ENCODE measurements at regions of chr11 and their contacts with region 1.

Region 1: DNA sequence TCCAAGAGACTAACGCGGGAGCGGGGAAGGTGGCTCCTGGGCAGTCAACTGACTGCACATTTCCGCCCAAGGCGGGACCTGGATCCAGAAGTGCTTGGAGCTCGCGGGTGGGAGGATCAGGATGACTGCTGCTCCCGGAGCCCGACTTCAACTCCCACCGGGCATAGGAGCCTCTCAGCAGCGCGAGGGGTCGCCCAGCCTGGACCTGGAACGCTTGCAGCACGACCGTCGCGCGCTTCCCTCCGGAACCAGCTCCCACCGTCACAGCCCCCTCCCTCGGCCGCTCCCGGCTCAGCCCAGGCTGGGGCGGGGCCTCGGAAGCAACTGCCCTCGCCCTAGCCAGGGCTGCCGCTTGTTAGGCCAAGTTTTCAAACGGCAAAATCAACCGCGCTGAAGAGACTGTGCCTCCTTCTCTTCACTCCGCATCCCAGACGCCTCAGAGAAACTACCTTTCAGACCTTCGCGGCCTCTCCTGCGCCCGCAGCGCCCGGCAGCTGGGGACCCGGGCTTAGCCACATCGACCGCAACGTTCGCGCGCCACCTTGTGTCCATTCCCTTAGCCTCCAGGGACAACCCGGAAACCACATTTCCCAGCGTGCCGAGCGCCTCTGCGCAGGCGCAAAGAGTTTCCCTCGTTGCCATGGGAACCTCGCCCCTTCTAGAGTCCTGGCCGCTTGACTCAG is 14.0 kb downstream of the SSH3 start:
- DNase-seq: peak; percentile 96 to 98
- H3K4me3 ChIP-seq: peak overlapping the region; percentile 38 to 94 (median 92)
- H3K27ac ChIP-seq: peak overlapping the region; percentile 95 to 97 (median 96)
- H3K4me1 ChIP-seq: peaks cover 15 to 16% of the 10 kb centered on the region in 2 donors
- H3K27me3 ChIP-seq: no peaks in the 10 kb centered on the region
- CTCF ChIP-seq: peak; percentile 58 to 99 (median 96)
- POLR2A ChIP-seq: peak in 1 of 2 donors; percentile 72

Region 2: GRCh38 chr11:67082035-67082791 is 235.1 kb before region 1 on chr11:
- intact Hi-C with region 1: loop called (anchors 5 kb)
- DNase-seq: peak; percentile 30
- H3K4me3 ChIP-seq: no peak overlapping the region
- H3K27ac ChIP-seq: no peak overlapping the region
- H3K4me1 ChIP-seq: peaks cover 10 to 12% of the 10 kb centered on the region in 2 donors
- H3K27me3 ChIP-seq: no peaks in the 10 kb centered on the region
- CTCF ChIP-seq: no peak
- POLR2A ChIP-seq: no peak

Region 3: DNA sequence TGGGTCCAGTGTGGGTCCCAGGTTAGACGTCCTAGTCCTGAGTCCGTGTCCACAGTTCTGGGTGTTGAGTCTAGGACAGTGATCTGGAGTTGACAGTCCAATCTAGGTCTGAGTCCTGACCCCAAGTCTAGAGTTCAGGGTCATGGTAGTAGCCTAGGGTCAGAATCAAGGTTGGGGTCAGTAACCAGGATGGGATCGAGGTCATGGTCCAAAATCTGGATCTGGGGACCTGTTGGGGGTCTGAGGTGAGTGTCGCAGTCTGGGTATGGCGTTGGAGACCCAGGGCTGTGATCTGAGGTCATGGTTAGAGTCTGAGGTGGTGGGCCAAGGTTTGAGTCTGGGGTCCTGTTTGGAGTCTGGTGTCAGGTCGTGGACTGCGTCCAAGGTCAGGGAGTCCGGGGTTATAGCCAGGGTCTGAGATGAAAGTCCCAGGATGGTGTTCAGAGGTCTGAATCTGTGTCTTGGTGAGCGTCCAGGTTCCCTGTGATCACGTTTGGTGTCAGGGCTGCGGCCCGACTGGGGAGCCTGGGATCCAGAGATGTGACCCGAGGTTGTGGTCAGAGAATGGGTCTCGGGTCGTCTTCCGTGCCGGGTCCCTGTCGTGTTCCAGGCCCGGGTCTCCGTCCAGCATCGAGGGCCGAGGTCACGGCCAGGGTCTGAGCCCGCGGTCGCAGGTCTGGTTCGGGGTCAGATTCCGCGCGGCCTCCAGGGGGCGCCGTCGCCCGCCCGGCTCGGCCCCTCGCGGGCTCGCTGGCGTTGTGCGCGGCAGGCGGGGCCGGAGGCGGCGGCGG is 51.5 kb before region 1 on chr11:
- intact Hi-C with region 1: loop called (anchors 2 kb)
- DNase-seq: peak; percentile 70 to 74
- H3K4me3 ChIP-seq: no peak overlapping the region
- H3K27ac ChIP-seq: peak overlapping the region; percentile 12 to 85 (median 73)
- H3K4me1 ChIP-seq: peaks cover 29 to 64% of the 10 kb centered on the region in 2 donors
- H3K27me3 ChIP-seq: no peaks in the 10 kb centered on the region
- CTCF ChIP-seq: peak; percentile 26 to 90 (median 56)
- POLR2A ChIP-seq: peak in 1 of 2 donors; percentile 3